ENCODE measurements at regions of chr17 and their contacts with region 1.

Region 1: DNA sequence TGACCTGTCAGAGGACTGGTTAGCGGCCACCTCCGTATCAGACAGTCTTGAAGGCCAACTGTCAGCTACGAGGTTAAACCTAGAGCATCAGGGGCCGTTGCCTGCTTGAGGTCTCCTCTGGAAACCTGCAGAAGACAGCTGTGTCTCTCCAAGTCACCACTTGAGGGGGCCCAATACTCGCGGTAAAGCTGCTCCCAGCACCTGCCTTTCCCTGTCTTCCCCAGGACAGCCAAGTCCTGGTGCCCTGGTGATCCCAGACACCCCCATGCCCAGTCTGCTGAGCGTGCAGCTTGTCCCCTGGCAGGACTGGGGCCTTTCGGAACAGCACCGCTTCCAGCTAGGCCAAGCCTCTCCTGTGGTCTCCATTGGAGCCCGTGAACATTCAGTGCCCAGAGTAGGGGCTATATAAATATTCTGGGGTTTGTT is 80.1 kb downstream of the DNAH17 start:
- DNase-seq: peak; percentile 69
- H3K4me3 ChIP-seq: no peak overlapping the region
- H3K27ac ChIP-seq: no peak overlapping the region
- H3K4me1 ChIP-seq: peaks cover 21% of the 10 kb centered on the region
- H3K27me3 ChIP-seq: peaks cover 13% of the 10 kb centered on the region
- CTCF ChIP-seq: peak; percentile 86

Region 2: DNA sequence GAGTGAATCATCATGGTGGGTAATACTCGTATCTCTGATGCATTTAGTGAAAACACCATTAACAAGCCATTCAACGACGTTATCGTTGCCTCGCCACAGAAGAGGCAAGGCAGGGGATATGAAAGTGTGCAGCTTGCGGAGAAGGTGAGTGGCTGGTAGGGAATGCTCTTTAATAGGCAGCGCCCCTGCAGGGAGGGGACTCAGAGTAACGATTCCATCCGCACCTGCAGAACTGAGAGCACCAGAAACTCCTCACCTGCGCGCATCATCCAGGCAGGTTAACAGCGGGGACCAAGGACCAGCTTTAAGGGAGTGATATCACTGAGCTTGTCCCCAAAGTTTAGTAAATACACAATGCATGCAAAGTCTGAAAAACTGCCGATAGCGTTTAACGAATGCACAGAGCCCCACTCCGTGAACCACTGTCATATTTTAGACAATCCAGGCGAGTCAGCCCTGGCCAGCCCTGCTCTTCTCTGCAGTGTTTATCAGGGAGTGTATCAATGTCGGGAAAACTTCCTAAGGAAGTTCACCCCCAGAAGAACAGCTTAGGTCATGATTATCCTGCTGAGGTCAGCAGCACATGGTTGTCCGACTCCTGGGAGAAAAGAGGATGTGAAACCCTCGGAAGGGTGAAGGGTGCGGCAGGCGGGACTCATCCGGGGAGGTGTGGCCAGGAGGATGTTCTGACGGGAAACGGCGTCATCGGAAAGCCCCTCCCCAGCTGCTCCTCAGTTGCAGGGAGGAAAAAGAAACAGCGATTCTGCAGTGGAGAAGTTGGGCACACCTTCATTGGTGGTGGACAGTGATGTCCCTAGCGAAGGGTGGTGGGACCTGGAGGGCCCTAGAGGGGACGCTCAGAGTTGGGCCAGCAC is 148.5 kb after region 1 on chr17:
- intact Hi-C with region 1: no loop called
- DNase-seq: peak; percentile 81
- H3K4me3 ChIP-seq: peak overlapping the region; percentile 21
- H3K27ac ChIP-seq: peak overlapping the region; percentile 81
- H3K4me1 ChIP-seq: peaks cover 16% of the 10 kb centered on the region
- H3K27me3 ChIP-seq: peaks cover 16% of the 10 kb centered on the region
- CTCF ChIP-seq: no peak

Region 3: GRCh38 chr17:78708510-78708973 is 211.4 kb after region 1 on chr17:
- intact Hi-C with region 1: loop called (anchors 10 kb)
- DNase-seq: peak; percentile 65
- H3K4me3 ChIP-seq: no peak overlapping the region
- H3K27ac ChIP-seq: peak overlapping the region; percentile 47
- H3K4me1 ChIP-seq: peaks cover 63% of the 10 kb centered on the region
- H3K27me3 ChIP-seq: no peaks in the 10 kb centered on the region
- CTCF ChIP-seq: peak; percentile 87